ENCODE measurements at regions of chr16 and their contacts with region 1.

Region 1: GRCh38 chr16:1420111-1420540 is 421 bp downstream of the UQCC4 start:
- DNase-seq: no peak
- H3K4me3 ChIP-seq: peak overlapping the region; percentile 83 to 98
- H3K27ac ChIP-seq: peak overlapping the region; percentile 4 to 78; a peak in 3 of 4 replicates
- H3K4me1 ChIP-seq: peaks cover 0 to 4% of the 10 kb centered on the region in 2 experiments; a peak in 3 of 4 replicates
- H3K27me3 ChIP-seq: no peaks in the 10 kb centered on the region
- CTCF ChIP-seq: no peak
- EP300 ChIP-seq: no peak
- RAD21 ChIP-seq: no peak

Region 2: DNA sequence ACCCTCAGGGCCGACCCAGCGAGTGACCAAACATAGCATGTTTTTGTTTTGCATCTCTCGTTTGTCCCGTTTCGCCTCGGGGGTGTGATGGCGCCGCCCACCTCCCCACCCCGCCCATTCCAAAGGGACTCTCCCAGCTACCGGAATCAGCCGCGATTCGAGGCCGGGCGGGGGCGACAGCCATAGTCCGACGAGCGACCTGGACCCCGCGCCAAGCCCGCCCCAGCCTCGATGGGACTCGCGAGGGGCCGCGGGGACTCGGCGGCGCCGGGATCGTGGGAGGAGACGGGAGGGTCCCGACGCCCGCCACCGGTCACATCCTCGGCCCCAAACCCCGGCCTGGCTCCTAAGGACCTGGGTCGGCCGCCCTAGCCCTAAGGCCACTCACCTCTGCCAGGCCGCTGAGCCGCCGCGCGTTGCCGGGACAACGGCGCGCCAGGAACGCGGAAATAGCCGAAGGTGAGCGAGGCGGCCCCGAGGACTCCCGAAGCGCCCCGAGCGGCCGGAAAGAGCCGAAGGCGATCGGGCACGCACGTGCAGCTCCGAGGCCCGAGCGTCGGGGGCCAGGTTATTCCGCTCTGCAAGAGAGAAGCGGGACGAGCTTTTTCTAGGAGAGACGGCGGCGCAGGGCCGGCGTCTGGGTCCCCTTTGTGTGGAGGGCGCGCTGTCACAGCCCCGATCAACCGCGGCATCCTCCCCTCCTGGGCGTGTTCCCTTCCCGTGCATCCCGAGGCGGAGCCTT is 190.3 kb after region 1 on chr16:
- CTCF ChIA-PET with region 1: no interaction called
- POLR2A ChIA-PET with region 1: interaction called, 10 read pairs
- DNase-seq: peak; percentile 92
- H3K4me3 ChIP-seq: peak overlapping the region; percentile 69 to 88
- H3K27ac ChIP-seq: peak overlapping the region; percentile 81
- H3K4me1 ChIP-seq: peaks cover 8 to 29% of the 10 kb centered on the region in 2 experiments; a peak in 2 of 4 replicates
- H3K27me3 ChIP-seq: no peaks in the 10 kb centered on the region
- CTCF ChIP-seq: no peak
- EP300 ChIP-seq: no peak
- RAD21 ChIP-seq: no peak